Heart left ventricle (tissue), 16 donors: ENCODE measurements at regions of chr7 and their contacts with region 1.

Region 1: DNA sequence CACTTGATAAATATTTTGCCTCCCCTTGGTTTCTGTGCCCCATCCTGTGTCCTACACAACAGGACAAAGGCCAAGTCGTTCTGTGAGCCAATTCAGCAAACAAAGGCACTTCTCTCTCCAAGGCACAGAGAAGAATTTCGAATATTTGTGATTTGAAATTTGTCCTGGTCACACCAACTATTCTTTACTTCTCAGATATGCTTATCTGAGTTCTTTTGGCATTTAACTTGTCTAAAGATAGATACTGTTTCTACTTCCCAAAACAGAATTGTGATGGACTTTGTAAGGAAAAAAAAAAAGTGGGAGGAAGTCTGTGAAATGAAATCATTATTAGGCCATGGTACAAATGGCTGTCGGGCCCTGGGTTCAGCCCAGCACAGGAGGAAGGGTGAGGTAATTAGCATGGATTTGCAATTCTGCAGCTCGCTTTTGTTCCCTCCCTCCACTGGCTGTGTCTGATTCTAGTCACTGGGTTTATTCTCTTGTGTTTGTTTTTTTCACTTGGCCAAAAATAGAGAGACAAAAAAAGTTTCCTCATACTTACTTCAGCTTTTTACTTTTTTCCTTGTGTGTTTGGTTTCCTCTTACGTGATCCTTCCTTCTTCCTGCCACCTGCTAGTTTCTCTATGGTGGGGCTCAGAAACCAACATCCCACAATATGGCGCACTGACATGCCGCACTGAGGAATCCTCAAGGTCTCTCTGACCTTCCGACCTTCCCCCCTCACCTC is 108.2 kb upstream of the MKLN1 start:
- DNase-seq: peak; percentile 59 to 78 (median 65)
- ATAC-seq: peak; percentile 78 to 97 (median 93)
- H3K4me3 ChIP-seq: no peak overlapping the region
- H3K27ac ChIP-seq: peak overlapping the region; percentile 25 to 82 (median 65)
- H3K4me1 ChIP-seq: peaks cover 0 to 20% (median 17%) of the 10 kb centered on the region in 12 donors
- H3K27me3 ChIP-seq: no peaks in the 10 kb centered on the region
- CTCF ChIP-seq: no peak
- POLR2A ChIP-seq: no peak

Region 2: GRCh38 chr7:131284702-131285419 is 65.4 kb after region 1 on chr7:
- intact Hi-C with region 1: loop called in 1 of 10 experiments (anchors 5 kb)
- DNase-seq: peak in 2 of 5 donors; percentile 41 to 45
- ATAC-seq: peak; percentile 54 to 78 (median 68)
- H3K4me3 ChIP-seq: no peak overlapping the region
- H3K27ac ChIP-seq: peak overlapping the region; percentile 11 to 84 (median 61)
- H3K4me1 ChIP-seq: peaks cover 0 to 37% (median 17%) of the 10 kb centered on the region in 12 donors
- H3K27me3 ChIP-seq: no peaks in the 10 kb centered on the region
- CTCF ChIP-seq: no peak
- POLR2A ChIP-seq: no peak